ENCODE measurements at regions of chr1 and their contacts with region 1.

Region 1: GRCh38 chr1:16625497-16626408 is 12.4 kb upstream of the NBPF1 start:
- DNase-seq: no peak
- ATAC-seq: peak; percentile 5
- H3K4me3 ChIP-seq: no peak overlapping the region
- H3K27ac ChIP-seq: no peak overlapping the region
- H3K4me1 ChIP-seq: 0 out of 2 replicates have a peak, but pooled peaks cover 3% of the 10 kb centered on the region
- H3K27me3 ChIP-seq: no peaks in the 10 kb centered on the region
- CTCF ChIP-seq: no peak

Region 2: DNA sequence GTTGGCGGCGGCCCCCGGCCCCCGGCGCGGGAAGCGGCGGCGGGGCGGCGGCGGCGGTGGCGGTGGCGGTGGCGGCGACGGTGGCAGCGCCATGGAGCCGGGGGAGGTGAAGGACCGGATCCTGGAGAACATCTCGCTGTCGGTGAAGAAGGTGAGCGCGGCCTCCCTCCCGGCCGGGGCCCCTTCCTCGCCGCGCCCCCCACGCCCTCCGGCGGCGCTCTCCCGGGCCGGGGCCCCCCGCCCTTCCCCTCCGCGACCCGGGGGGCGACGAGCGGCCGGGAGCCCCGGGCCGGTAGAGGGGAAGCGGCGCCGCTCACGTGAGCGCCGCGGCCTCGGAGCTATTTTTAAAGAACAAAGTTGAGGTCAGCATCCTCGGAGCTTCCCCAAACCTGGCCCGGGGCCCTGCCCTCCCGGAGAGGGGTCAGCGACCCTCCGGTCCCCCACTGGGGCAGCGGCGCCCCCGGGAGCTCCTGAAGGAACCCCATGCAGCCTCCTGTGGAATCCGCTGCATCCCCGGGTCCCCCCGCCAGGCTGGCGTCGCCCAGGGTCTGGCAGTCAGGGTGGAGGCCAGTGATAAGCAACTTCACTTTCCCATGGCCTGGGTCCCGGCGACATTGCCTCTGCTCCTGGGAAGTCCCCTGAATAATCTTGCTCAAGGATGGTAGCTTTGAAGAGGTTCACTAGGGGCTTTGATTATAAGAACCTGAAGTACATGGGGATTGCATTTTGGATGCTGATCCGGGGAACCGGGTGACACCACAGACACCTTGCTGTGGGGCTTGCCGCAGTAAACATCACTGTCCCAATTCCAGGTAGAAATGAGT is 941.1 kb before region 1 on chr1:
- CTCF ChIA-PET with region 1: no interaction called
- POLR2A ChIA-PET with region 1: no interaction called
- in situ Hi-C with region 1: no loop called
- intact Hi-C with region 1: no loop called
- DNase-seq: no peak
- ATAC-seq: peak; percentile 67
- H3K4me3 ChIP-seq: peak overlapping the region; percentile 73 to 85
- H3K27ac ChIP-seq: peak overlapping the region; percentile 71
- H3K4me1 ChIP-seq: peaks cover 9% of the 10 kb centered on the region; the same call in 1 of the 2 replicates
- H3K27me3 ChIP-seq: no peaks in the 10 kb centered on the region
- CTCF ChIP-seq: no peak

Region 3: GRCh38 chr1:16498573-16499413 is 127.0 kb before region 1 on chr1:
- CTCF ChIA-PET with region 1: interaction called, 11 read pairs
- POLR2A ChIA-PET with region 1: no interaction called
- in situ Hi-C with region 1: no loop called
- intact Hi-C with region 1: no loop called
- DNase-seq: no peak
- ATAC-seq: peak; percentile 98
- H3K4me3 ChIP-seq: peak overlapping the region; percentile 66 to 88
- H3K27ac ChIP-seq: peak overlapping the region; percentile 51
- H3K4me1 ChIP-seq: peaks cover 3% of the 10 kb centered on the region; the same call in 1 of the 2 replicates
- H3K27me3 ChIP-seq: no peaks in the 10 kb centered on the region
- CTCF ChIP-seq: no peak; the same call in 1 of the 2 replicates

Region 4: DNA sequence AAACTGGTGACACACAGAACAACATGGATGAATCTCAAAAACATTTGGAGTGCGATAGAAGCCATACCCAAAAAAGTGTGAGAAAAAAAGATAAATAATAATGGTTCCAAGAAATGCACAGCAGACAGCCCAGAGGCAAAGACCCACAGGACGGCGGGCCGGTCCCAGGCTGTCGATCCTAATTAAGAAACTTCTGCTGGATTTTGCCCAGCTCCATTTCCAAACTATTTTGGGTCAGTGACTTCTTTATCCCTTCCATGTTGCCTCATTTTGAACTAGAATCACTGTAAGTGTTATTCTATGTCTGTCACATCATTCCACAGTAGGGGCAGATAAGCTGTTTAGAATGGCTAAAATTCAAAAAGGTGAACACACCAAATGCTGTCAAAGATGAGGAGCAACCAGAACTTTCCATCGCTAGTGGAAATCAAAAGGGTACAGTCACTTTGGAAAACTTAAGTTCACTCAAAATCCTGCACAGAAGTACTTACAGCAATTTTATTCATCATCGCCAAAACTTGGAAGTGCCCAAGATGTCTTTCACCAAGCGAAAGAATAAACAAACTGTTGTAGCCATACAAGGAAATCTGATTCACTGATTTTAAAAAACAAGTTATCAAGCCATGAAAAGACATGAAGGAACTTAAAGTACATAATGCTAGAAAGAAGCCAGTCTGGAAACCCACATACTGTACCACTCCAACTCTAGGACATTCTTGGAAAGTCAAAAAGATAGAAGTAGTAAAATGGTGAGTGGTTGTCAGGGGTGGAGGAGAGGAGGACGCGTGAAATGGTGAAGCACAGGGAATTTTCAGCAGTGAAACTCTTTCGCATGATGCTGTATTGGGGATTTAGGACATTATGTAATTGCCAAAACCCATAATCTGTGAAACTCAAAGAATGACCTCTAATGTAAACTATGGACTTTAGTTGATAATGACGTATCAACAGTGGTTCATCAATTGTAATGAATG is 19.9 kb before region 1 on chr1:
- CTCF ChIA-PET with region 1: interaction called, 10 read pairs
- POLR2A ChIA-PET with region 1: no interaction called
- in situ Hi-C with region 1: no loop called
- intact Hi-C with region 1: no loop called
- DNase-seq: no peak
- ATAC-seq: no peak
- H3K4me3 ChIP-seq: no peak overlapping the region
- H3K27ac ChIP-seq: no peak overlapping the region
- H3K4me1 ChIP-seq: peaks cover 3% of the 10 kb centered on the region
- H3K27me3 ChIP-seq: no peaks in the 10 kb centered on the region
- CTCF ChIP-seq: no peak

Region 5: DNA sequence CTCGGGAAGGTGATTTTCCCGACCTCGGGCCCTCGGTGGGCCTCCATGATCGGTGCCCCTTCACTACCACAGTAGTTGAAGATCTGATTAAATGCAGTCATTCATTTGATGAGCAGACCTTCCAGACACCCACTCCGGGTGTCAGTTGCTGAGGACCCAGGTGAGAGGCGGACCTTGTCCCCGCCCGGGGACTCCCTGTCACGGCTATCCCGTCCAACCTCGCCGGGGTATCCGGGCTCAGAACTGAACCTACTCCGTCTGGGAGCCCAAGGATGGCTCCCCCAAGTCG is 18.4 kb after region 1 on chr1:
- CTCF ChIA-PET with region 1: interaction called, 7 read pairs
- POLR2A ChIA-PET with region 1: interaction called, 14 read pairs
- in situ Hi-C with region 1: no loop called
- intact Hi-C with region 1: no loop called
- DNase-seq: no peak
- ATAC-seq: no peak; the same call in 1 of the 2 replicates
- H3K4me3 ChIP-seq: peak overlapping the region; percentile 75 to 84
- H3K27ac ChIP-seq: peak overlapping the region; percentile 94
- H3K4me1 ChIP-seq: peaks cover 19% of the 10 kb centered on the region
- H3K27me3 ChIP-seq: no peaks in the 10 kb centered on the region
- CTCF ChIP-seq: no peak

Region 6: DNA sequence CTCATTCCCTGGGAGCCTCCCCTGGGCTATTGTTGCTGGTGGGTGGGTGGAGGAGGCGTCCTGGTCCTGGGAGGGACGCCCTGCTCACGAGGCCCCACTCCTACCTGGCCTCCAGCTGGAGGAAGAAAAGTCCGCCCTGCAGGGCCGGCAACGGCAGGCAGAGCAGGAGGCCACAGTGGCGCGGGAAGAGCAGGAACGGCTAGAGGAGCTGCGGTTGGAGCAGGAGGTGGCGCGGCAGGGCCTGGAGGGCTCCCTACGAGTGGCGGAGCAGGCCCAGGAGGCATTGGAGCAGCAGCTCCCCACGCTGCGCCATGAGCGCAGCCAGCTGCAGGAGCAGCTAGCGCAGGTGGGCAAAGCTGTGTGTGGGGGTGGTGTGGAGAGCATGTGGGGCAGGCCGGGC is 320.9 kb after region 1 on chr1:
- CTCF ChIA-PET with region 1: interaction called, 58 read pairs
- POLR2A ChIA-PET with region 1: interaction called, 3 read pairs
- in situ Hi-C with region 1: no loop called
- intact Hi-C with region 1: no loop called
- DNase-seq: no peak
- ATAC-seq: no peak
- H3K4me3 ChIP-seq: no peak overlapping the region
- H3K27ac ChIP-seq: no peak overlapping the region
- H3K4me1 ChIP-seq: no peaks in the 10 kb centered on the region; the same call in 1 of the 2 replicates
- H3K27me3 ChIP-seq: no peaks in the 10 kb centered on the region
- CTCF ChIP-seq: no peak

Measured in Panc1 (cell line).